ENCODE measurements at regions of chr19 and their contacts with region 1.

Region 1: GRCh38 chr19:2016041-2016807 is 710 bp upstream of the BTBD2 start:
- H3K4me3 Mint-ChIP-seq: peak overlapping the region; percentile 61
- H3K27ac Mint-ChIP-seq: peak overlapping the region; percentile 47
- H3K4me1 Mint-ChIP-seq: peaks cover 46% of the 10 kb centered on the region
- H3K27me3 Mint-ChIP-seq: no peaks in the 10 kb centered on the region

Region 2: DNA sequence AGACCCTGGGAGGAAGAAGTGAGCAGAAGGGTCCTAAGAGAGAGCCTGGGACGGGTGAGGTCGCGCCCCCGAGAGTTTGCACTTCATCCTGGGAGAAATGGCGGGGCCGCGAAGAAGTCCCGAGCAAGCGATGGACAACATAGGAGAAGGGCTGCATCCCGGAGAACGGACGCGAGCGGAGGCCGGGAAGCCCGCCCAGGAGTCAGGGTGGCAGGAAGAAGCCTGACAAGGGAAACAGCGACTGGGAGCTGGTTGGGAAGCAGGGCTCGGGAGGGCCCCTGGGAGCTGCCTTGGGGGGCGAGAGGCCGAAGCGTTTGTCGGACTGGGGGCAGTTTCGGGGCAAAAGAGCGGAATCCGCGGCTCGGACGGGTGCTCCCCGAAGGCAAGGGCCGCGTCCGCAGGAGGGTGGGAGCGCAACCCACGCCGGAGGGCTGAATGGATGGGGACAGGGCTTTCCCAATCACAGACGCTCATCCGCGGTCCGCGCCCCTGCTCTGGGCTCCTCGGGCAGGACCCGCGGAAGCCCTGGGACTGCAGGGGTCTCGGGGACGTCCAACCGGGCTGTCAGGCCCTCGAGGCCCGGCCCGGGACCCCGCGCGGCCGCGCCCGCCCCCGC is 131.4 kb before region 1 on chr19:
- intact Hi-C with region 1: loop called (anchors 10 kb)
- H3K4me3 Mint-ChIP-seq: peak overlapping the region; percentile 92
- H3K27ac Mint-ChIP-seq: peak overlapping the region; percentile 84
- H3K4me1 Mint-ChIP-seq: peaks cover 50% of the 10 kb centered on the region
- H3K27me3 Mint-ChIP-seq: no peaks in the 10 kb centered on the region

Region 3: DNA sequence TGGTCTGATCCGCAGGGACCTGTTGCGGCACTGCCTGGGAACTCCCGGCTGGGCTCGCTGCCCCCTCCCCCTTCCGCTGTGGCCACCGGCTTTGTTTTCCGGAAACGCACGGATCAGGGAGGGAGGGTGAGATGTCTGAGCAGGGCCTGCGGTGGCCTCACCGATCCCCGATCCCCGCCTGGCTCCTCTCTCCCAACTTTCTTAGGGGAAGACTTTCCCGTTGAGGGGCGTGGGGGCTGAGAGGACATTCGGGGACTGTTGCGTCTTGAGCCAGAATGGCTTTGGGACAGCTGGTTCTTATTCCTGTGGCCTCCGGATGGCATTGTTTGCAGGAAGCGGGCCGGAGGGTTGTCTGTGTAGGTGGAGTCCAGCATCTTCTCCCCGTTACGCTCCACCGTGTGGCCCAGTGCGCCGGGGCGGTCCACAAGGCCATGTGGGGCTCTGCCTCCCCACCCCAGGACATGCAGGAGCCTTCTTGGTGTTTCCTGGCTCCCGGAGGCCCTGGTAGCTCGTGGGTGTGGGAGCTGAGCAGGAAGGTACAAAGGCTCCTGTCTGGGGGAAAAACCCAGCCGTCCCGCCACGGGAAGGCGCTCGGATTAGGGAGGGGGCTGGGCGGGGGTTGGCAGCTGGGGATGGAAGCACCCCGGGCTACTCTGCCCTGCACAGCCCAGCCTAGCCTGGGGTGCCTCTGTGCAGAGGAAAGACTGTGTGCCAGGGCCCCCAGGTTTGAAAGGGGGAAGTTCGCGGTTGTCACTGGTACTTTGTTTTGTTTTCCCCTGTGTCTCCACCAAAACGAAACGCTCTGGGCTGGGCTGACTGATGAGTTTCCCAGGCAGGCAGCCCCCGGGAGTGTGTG is 73.9 kb before region 1 on chr19:
- intact Hi-C with region 1: no loop called
- H3K4me3 Mint-ChIP-seq: peak overlapping the region; percentile 93
- H3K27ac Mint-ChIP-seq: peak overlapping the region; percentile 97
- H3K4me1 Mint-ChIP-seq: peaks cover 48% of the 10 kb centered on the region
- H3K27me3 Mint-ChIP-seq: no peaks in the 10 kb centered on the region

Measured in dendritic cell treated with granulocyte-macrophage colony-stimulating factor and Interleukin-4, amounts not matched to agents 40 ng/mL and 50 ng/mL, for 4 days (primary cell).